Activated CD4-positive, alpha-beta T cell treated with anti-CD3 and anti-CD28 coated beads, Interleukin-2, amount 10 ng/mL, durations not matched to agents 24 days and 14 days (primary cell): ENCODE measurements at regions of chr14 and their contacts with region 1.

Region 1: DNA sequence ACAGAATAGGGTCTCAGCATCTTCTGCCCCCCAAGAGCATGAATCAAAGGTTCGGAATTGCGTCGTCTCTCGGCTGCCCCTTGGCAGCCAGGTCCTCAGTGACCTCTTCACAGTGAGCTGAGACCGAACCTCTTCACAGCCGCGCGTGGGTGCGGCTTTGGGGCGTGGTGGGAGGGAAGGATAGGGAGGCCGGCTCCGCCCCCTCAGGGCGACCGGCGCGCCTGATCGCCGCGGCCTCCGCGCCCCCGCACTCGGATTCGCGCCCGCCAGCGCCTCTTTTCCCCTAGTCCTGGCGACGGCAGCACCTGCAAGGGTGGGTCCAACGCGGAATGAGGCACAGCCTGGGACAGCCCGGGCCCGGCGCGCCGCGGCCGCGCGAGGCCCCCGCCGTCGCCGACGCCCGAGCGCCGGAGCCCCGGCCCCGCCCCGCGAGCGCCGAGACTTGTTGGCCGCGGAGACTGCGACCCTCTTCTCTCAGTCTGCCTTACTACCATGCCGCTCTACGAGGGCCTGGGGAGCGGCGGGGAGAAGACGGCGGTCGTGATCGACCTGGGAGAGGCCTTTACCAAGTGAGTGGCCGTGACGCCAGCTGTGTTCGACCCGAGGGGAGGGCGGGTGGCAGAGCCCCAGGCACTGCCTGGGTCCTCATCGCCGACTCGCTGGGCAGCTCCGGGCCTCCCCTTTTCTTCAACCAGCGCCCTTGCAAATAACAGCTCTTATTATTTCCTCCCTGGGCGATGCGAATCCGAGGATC is at the start of gene ACTR10:
- DNase-seq: peak; percentile 96
- H3K4me3 Mint-ChIP-seq: peak within 1 kb of the TSS; percentile 95
- H3K27ac Mint-ChIP-seq: peak within 1 kb of the TSS; percentile 94
- H3K4me1 Mint-ChIP-seq: peaks cover 17% of the 10 kb centered on the region
- H3K27me3 Mint-ChIP-seq: peaks cover 4% of the 10 kb centered on the region
- total RNA-seq, gene ACTR10: 38.7 and 40.5 TPM in 2 replicates

Region 2: GRCh38 chr14:58107947-58108552 is 91.9 kb before region 1 on chr14:
- intact Hi-C with region 1: no loop called
- DNase-seq: peak; percentile 75
- H3K4me3 Mint-ChIP-seq: no peak overlapping the region
- H3K27ac Mint-ChIP-seq: no peak overlapping the region
- H3K4me1 Mint-ChIP-seq: peaks cover 3% of the 10 kb centered on the region
- H3K27me3 Mint-ChIP-seq: peaks cover 37% of the 10 kb centered on the region

Region 3: GRCh38 chr14:58239244-58240195 is 39.6 kb after region 1 on chr14:
- intact Hi-C with region 1: loop called (anchors 1 kb)
- DNase-seq: peak; percentile 94
- H3K4me3 Mint-ChIP-seq: no peak overlapping the region
- H3K27ac Mint-ChIP-seq: no peak overlapping the region
- H3K4me1 Mint-ChIP-seq: peaks cover 24% of the 10 kb centered on the region
- H3K27me3 Mint-ChIP-seq: no peaks in the 10 kb centered on the region

Region 4: GRCh38 chr14:58362798-58363412 is 163.0 kb after region 1 on chr14:
- intact Hi-C with region 1: no loop called
- DNase-seq: peak; percentile 59
- H3K4me3 Mint-ChIP-seq: no peak overlapping the region
- H3K27ac Mint-ChIP-seq: no peak overlapping the region
- H3K4me1 Mint-ChIP-seq: peaks cover 6% of the 10 kb centered on the region
- H3K27me3 Mint-ChIP-seq: no peaks in the 10 kb centered on the region